MCF 10A (cell line): ENCODE measurements at regions of chr13 and their contacts with region 1.

Region 1: GRCh38 chr13:98653463-98653985 is 76.6 kb upstream of the STK24 start:
- DNase-seq: peak; percentile 85
- H3K4me3 Mint-ChIP-seq: no peak overlapping the region
- H3K27ac Mint-ChIP-seq: no peak overlapping the region
- H3K4me1 Mint-ChIP-seq: peaks cover 5% of the 10 kb centered on the region
- H3K27me3 Mint-ChIP-seq: peaks cover 11% of the 10 kb centered on the region
- CTCF ChIP-seq: peak; percentile 71

Region 2: GRCh38 chr13:98454389-98454881 is 199.1 kb before region 1 on chr13:
- CTCF ChIA-PET with region 1: interaction called, 13 read pairs
- POLR2A ChIA-PET with region 1: no interaction called
- intact Hi-C with region 1: no loop called
- DNase-seq: peak; percentile 64
- H3K4me3 Mint-ChIP-seq: no peak overlapping the region
- H3K27ac Mint-ChIP-seq: no peak overlapping the region
- H3K4me1 Mint-ChIP-seq: peaks cover 5% of the 10 kb centered on the region
- H3K27me3 Mint-ChIP-seq: no peaks in the 10 kb centered on the region
- CTCF ChIP-seq: no peak

Region 3: DNA sequence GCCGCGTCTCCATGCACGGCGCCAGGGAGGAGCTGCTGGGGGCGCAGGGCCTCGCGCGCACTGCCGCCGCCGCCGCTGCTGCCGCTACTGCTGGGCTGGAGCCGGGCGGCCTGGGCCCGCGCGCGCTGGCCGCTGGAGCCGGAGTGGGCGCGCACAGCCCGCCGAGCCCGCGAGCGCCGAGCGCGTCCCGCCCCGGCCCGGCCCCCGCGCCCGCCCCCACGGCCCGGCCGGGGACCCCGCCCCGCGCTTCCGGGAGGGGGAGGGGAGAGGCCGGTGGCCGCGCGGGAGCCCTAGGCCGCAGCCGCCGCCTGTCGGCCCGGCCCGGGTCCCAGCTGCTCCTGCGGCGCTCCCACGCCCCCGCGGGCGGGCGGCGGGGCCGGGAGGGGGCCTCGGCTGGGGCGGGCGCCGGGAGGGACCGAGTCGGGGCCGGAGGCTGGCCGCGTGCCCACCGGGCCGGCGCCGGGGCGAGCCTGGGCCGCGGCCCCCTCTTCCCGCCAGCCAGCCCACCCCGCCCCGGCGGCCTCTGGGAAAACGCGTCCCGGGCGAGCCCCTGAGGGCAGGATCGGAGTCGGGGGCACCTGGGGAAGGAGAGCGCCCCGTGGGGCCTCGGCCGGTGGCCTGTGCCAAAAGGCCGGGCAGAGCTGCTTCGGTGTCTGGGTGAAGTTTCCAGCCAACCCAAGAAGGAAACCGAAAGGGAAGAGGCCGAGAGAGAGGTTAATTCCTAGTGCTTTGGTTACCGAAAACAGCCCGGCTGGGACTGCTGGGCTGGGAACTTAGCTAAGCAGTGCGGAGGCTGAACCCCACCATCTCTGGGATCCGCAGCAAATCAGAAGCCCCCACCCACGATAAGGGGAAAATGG is 76.3 kb before region 1 on chr13 and contains the start of gene STK24:
- CTCF ChIA-PET with region 1: interaction called, 10 read pairs
- POLR2A ChIA-PET with region 1: interaction called, 7 read pairs
- intact Hi-C with region 1: loop called (anchors 2 kb)
- DNase-seq: peak; percentile 67
- H3K4me3 Mint-ChIP-seq: peak within 1 kb of the TSS; percentile 82
- H3K27ac Mint-ChIP-seq: peak within 1 kb of the TSS; percentile 83
- H3K4me1 Mint-ChIP-seq: peaks cover 22% of the 10 kb centered on the region
- H3K27me3 Mint-ChIP-seq: no peaks in the 10 kb centered on the region
- CTCF ChIP-seq: no peak
- total RNA-seq, gene STK24: 200 and 215 TPM in 2 replicates

Region 4: DNA sequence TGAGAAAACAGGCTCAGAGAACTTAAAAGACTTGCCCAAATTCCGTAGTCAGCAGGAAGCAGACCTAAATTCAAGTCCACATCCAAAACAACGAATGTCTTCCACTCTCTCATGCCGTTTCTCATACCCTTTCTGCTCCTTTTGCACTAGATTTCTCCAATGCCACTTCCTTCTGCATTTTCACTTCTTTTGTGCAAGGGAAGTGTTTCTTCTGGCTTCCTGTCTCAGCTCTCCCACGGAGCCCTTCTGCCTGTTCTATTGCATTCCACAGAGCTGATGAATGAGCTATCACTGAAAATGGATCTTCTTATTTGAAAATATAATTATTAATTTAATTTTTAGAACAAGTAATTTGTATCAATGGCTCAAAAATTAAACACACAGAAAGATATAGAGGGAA is 20.6 kb before region 1 on chr13:
- CTCF ChIA-PET with region 1: interaction called, 24 read pairs
- POLR2A ChIA-PET with region 1: no interaction called
- intact Hi-C with region 1: no loop called
- DNase-seq: no peak
- H3K4me3 Mint-ChIP-seq: no peak overlapping the region
- H3K27ac Mint-ChIP-seq: no peak overlapping the region
- H3K4me1 Mint-ChIP-seq: no peaks in the 10 kb centered on the region
- H3K27me3 Mint-ChIP-seq: peaks cover 13% of the 10 kb centered on the region
- CTCF ChIP-seq: no peak

Region 5: GRCh38 chr13:98938801-98939200 is 285.3 kb after region 1 on chr13:
- CTCF ChIA-PET with region 1: no interaction called
- POLR2A ChIA-PET with region 1: no interaction called
- intact Hi-C with region 1: no loop called
- DNase-seq: no peak
- H3K4me3 Mint-ChIP-seq: no peak overlapping the region
- H3K27ac Mint-ChIP-seq: no peak overlapping the region
- H3K4me1 Mint-ChIP-seq: peaks cover 9% of the 10 kb centered on the region
- H3K27me3 Mint-ChIP-seq: no peaks in the 10 kb centered on the region
- CTCF ChIP-seq: no peak

Region 6: DNA sequence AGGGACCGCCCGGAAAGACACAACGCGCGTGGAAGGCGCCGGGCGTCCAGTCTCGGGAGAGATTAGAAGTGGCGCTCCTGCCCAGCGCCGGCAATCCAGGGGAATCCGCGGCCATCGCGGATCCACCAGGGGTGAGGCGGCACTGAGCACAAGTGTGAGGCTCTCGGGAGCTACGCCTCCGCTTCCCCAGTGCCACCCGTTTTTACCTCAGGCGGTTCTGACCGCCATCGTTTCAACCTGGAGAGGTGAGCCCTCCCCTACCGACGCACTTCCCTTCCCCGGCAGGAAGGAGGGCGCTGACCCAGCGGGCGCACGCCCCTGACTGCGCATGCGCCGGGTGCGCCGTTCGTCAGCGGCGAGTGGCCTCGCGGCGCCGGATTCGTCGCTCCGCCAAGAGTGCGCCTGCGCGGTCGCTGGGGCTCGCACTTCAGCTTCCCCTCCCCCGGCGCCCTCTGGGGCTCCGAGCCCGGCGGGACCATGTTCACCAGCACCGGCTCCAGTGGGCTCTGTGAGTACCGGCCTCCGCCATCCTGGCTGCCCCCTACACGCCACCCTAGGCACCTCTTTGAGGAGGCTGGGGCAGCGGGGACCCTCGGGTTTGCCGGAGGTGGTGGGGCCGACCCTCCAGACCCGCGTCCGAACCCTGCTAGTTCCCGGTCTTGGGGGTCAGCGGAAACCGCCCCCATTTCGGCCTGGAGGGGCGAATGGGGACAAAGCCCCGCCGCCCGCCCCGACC is 547.1 kb after region 1 on chr13 and contains the start of gene UBAC2:
- CTCF ChIA-PET with region 1: no interaction called
- POLR2A ChIA-PET with region 1: no interaction called
- intact Hi-C with region 1: no loop called
- DNase-seq: peak; percentile 96
- H3K4me3 Mint-ChIP-seq: peak within 1 kb of the TSS; percentile 94
- H3K27ac Mint-ChIP-seq: peak within 1 kb of the TSS; percentile 97
- H3K4me1 Mint-ChIP-seq: peaks cover 38% of the 10 kb centered on the region
- H3K27me3 Mint-ChIP-seq: no peaks in the 10 kb centered on the region
- CTCF ChIP-seq: no peak
- total RNA-seq, gene UBAC2: 74.7 and 78.3 TPM in 2 replicates